ENCODE measurements at regions of chr6 and their contacts with region 1.

Region 1: GRCh38 chr6:75830959-75831885 is 82.2 kb downstream of the MYO6 start:
- DNase-seq: peak; percentile 39
- H3K4me3 Mint-ChIP-seq: no peak overlapping the region
- H3K27ac Mint-ChIP-seq: no peak overlapping the region
- H3K4me1 Mint-ChIP-seq: peaks cover 9% of the 10 kb centered on the region
- H3K27me3 Mint-ChIP-seq: peaks cover 3% of the 10 kb centered on the region

Region 2: DNA sequence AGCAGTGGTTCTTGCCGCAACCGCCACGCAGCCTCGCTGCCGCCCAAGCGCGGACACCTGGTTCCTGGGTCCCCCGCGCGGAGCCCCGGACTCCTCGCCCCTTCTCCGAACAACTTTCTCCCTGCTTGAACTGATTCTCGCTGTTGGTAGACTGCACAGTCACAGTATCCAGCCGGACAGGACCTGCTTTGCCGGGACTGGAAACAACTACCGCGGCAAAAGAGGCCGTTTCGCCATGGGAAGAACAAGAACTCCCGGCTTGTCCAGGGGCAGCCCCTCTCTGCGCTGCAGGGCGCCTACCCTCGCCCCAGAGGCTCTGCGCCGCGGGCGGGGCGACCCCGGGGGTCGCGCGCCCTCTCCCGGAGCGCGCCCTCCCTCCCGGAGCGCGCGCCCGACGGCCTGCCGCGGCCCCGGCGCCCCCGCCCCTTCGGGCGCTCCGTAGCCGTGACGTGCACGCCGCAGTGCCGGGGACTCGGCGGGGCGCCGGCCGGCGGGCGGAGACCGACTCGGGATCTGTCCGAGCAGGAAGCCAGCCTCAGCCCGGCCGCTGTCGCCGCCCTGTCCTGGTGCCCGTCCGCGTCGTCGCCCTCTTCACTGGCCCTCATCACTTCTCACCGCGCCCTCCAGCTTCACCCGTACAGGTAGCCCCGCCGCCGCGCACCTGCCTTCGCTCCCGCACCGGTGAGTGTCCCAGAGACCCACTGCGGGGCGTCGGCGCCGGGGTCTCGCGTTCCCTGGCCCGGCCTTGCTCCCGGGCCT is 82.3 kb before region 1 on chr6 and contains the start of gene MYO6:
- CTCF ChIA-PET with region 1: no interaction called
- intact Hi-C with region 1: loop called (anchors 2 kb)
- DNase-seq: peak; percentile 27
- H3K4me3 Mint-ChIP-seq: peak within 1 kb of the TSS; percentile 85
- H3K27ac Mint-ChIP-seq: no peak within 1 kb of the TSS
- H3K4me1 Mint-ChIP-seq: peaks cover 6% of the 10 kb centered on the region
- H3K27me3 Mint-ChIP-seq: peaks cover 36% of the 10 kb centered on the region
- total RNA-seq, gene MYO6: 1.8 to 2.0 TPM

Region 3: DNA sequence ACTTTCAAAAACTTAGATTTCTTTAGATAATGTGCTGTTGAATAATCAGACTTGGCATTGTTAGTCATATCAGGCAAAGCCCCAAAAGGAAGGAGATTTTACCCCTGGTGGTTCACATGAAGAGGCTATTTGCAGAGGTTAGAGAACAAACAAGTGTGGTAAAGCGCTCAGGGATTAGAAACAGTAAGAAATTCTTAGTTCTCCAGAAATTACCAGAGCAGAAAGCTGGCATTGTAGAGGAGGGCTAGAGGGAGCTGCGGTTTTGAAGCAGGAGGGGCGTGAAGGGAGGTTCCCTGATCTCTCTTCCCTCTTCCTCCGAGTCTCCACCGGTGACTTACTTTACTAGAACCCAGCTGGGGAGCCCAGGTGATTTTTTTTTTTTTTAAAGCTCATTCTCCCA is 72.0 kb before region 1 on chr6:
- CTCF ChIA-PET with region 1: no interaction called
- intact Hi-C with region 1: no loop called
- DNase-seq: no peak
- H3K4me3 Mint-ChIP-seq: no peak overlapping the region
- H3K27ac Mint-ChIP-seq: no peak overlapping the region
- H3K4me1 Mint-ChIP-seq: no peaks in the 10 kb centered on the region
- H3K27me3 Mint-ChIP-seq: peaks cover 22% of the 10 kb centered on the region

Region 4: GRCh38 chr6:75786152-75786551 is 45.1 kb before region 1 on chr6:
- CTCF ChIA-PET with region 1: no interaction called
- intact Hi-C with region 1: loop called (anchors 1 kb)
- DNase-seq: no peak
- H3K4me3 Mint-ChIP-seq: no peak overlapping the region
- H3K27ac Mint-ChIP-seq: no peak overlapping the region
- H3K4me1 Mint-ChIP-seq: peaks cover 8% of the 10 kb centered on the region
- H3K27me3 Mint-ChIP-seq: peaks cover 6% of the 10 kb centered on the region